Naive thymus-derived CD4-positive, alpha-beta T cell (primary cell): ENCODE measurements at regions of chr7 and their contacts with region 1.

Region 1: DNA sequence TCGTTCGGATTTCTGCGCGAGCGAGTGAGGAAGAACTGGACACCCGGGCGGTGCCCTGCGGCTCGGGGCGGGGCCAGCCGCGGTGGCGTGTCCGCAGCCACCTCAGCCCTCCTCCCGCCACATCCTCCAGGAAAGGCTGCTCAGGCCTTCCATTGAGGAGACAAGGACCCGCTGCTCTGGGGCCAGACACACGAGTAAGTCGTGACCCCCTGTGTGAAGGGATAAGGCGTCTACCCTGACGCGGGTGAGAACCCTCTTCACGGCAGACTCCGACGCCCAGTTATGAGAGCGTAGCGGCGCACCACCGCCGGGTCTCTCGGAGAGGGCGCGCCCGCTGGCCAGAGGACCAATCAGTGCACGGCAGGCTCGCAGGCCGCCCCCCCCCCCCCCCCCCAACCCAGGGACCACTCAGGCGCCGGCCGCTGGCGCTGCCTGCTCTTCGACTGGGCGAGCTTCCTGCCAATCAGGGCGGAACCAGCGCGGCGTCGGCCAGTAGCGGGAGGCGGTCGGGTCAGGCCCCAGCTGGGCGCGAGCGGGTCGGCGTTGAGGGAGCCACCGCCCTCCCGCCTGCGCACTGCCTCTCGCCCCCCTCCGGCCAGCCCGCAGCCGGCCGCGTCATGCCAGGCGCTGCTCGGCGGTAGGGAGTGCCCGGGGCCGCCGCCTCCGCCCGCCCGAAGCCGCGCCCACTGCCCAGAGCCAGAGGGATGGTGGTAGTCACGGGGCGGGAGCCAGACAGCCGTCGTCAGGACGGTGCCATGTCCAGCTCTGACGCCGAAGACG is at the start of gene KCTD7:
- DNase-seq: peak; percentile 89 to 95 (median 92)
- ATAC-seq: peak; percentile 93
- H3K4me3 ChIP-seq: peak within 1 kb of the TSS; percentile 98
- H3K4me3 Mint-ChIP-seq: peak within 1 kb of the TSS; percentile 82 to 92 (median 89)
- H3K27ac ChIP-seq: peak within 1 kb of the TSS; percentile 91
- H3K27ac Mint-ChIP-seq: peak within 1 kb of the TSS; percentile 65 to 92 (median 89)
- H3K4me1 ChIP-seq: peaks cover 31 to 34% of the 10 kb centered on the region in 2 donors
- H3K4me1 Mint-ChIP-seq: peaks cover 37 to 51% (median 47%) of the 10 kb centered on the region in 7 donors
- H3K27me3 ChIP-seq: no peaks in the 10 kb centered on the region
- H3K27me3 Mint-ChIP-seq: peaks cover 0 to 4% (median 0%) of the 10 kb centered on the region in 5 donors
- total RNA-seq, gene KCTD7: 22.9 to 43.6 (median 33.8) TPM

Region 2: GRCh38 chr7:66557608-66558143 is 70.9 kb before region 1 on chr7:
- CTCF ChIA-PET with region 1: interaction called, 3 read pairs
- POLR2A ChIA-PET with region 1: no interaction called
- intact Hi-C with region 1: loop called (anchors 1 to 2 kb)
- DNase-seq: peak; percentile 39 to 83 (median 68)
- ATAC-seq: peak; percentile 89
- H3K4me3 ChIP-seq: no peak overlapping the region
- H3K4me3 Mint-ChIP-seq: no peak overlapping the region
- H3K27ac ChIP-seq: no peak overlapping the region
- H3K27ac Mint-ChIP-seq: peak overlapping the region in 2 of 9 donors; percentile 51
- H3K4me1 ChIP-seq: peaks cover 0 to 4% of the 10 kb centered on the region in 2 donors
- H3K4me1 Mint-ChIP-seq: peaks cover 0 to 7% (median 4%) of the 10 kb centered on the region in 7 donors
- H3K27me3 ChIP-seq: no peaks in the 10 kb centered on the region
- H3K27me3 Mint-ChIP-seq: no peaks in the 10 kb centered on the region

Region 3: GRCh38 chr7:66591799-66592596 is 36.6 kb before region 1 on chr7:
- CTCF ChIA-PET with region 1: no interaction called
- POLR2A ChIA-PET with region 1: interaction called, 8 read pairs
- intact Hi-C with region 1: loop called (anchors 1 kb)
- DNase-seq: peak; percentile 65 to 90 (median 88)
- ATAC-seq: peak; percentile 98
- H3K4me3 ChIP-seq: peak overlapping the region; percentile 88
- H3K4me3 Mint-ChIP-seq: peak overlapping the region; percentile 95 to 99 (median 98)
- H3K27ac ChIP-seq: peak overlapping the region; percentile 82
- H3K27ac Mint-ChIP-seq: peak overlapping the region; percentile 88 to 99 (median 97)
- H3K4me1 ChIP-seq: peaks cover 8 to 16% of the 10 kb centered on the region in 2 donors
- H3K4me1 Mint-ChIP-seq: peaks cover 33 to 69% (median 53%) of the 10 kb centered on the region in 7 donors
- H3K27me3 ChIP-seq: no peaks in the 10 kb centered on the region
- H3K27me3 Mint-ChIP-seq: no peaks in the 10 kb centered on the region

Region 4: DNA sequence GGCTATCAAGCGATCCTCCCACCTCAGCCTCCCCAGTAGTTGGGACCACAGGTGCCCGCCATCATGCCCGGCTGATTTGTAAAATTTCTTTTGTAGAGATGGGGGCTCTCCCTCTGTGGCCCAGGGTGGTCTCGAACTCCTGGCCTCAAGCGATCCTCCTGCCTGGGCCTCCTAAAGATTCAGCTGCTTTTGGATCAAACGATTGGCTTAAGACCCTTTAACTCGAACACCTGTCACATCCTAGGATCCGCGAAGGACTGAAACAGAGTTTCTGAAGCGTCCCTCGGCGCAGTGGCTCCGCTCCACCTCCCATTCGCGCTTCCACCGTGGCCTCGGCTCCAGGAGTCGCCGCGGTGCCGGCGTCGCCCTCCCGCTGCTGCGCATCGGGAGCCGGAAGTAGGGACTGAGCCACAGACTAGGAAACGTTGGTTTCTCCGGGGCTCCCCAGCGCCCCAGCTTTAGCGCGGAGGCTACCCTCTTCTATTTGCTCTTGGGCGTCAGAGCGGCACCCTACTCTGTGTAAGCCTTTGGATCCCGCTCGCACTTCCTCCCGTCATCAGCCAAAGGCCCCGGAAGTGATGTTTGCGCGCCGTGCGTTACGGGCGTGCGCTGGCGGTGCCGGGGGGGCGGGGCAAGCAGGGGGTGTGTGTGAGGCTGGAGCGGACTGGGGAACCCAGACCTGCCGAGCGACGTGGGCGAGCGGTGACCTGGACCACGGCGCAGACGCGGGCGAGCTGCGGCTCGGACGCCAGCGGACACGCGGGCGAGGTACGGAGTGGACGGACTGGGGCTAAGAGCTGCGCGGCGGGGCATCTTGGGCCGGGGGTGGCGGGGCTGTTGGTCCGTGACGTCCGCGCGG is 53.2 kb after region 1 on chr7:
- CTCF ChIA-PET with region 1: no interaction called
- POLR2A ChIA-PET with region 1: interaction called, 9 read pairs
- intact Hi-C with region 1: loop called (anchors 1 kb)
- DNase-seq: peak; percentile 92 to 97 (median 95)
- ATAC-seq: peak; percentile 98
- H3K4me3 ChIP-seq: peak overlapping the region; percentile 96
- H3K4me3 Mint-ChIP-seq: peak overlapping the region; percentile 82 to 96 (median 92)
- H3K27ac ChIP-seq: peak overlapping the region; percentile 95
- H3K27ac Mint-ChIP-seq: peak overlapping the region; percentile 86 to 98 (median 97)
- H3K4me1 ChIP-seq: peaks cover 5 to 11% of the 10 kb centered on the region in 2 donors
- H3K4me1 Mint-ChIP-seq: peaks cover 7 to 59% (median 31%) of the 10 kb centered on the region in 7 donors
- H3K27me3 ChIP-seq: no peaks in the 10 kb centered on the region
- H3K27me3 Mint-ChIP-seq: no peaks in the 10 kb centered on the region

Region 5: GRCh38 chr7:67302113-67303039 is 673.8 kb after region 1 on chr7:
- CTCF ChIA-PET with region 1: no interaction called
- POLR2A ChIA-PET with region 1: interaction called, 3 read pairs
- intact Hi-C with region 1: loop called in 1 of 2 experiments (anchors 10 kb)
- DNase-seq: peak; percentile 90 to 97 (median 95)
- ATAC-seq: peak; percentile 89
- H3K4me3 ChIP-seq: peak overlapping the region; percentile 74
- H3K4me3 Mint-ChIP-seq: peak overlapping the region; percentile 89 to 99 (median 96)
- H3K27ac ChIP-seq: peak overlapping the region; percentile 88
- H3K27ac Mint-ChIP-seq: peak overlapping the region; percentile 87 to 99 (median 98)
- H3K4me1 ChIP-seq: peaks cover 3 to 7% of the 10 kb centered on the region in 2 donors
- H3K4me1 Mint-ChIP-seq: peaks cover 10 to 36% (median 25%) of the 10 kb centered on the region in 7 donors
- H3K27me3 ChIP-seq: no peaks in the 10 kb centered on the region
- H3K27me3 Mint-ChIP-seq: no peaks in the 10 kb centered on the region